Left ventricle myocardium inferior (tissue), 1 donor: ENCODE measurements at regions of chr6 and their contacts with region 1.

Region 1: DNA sequence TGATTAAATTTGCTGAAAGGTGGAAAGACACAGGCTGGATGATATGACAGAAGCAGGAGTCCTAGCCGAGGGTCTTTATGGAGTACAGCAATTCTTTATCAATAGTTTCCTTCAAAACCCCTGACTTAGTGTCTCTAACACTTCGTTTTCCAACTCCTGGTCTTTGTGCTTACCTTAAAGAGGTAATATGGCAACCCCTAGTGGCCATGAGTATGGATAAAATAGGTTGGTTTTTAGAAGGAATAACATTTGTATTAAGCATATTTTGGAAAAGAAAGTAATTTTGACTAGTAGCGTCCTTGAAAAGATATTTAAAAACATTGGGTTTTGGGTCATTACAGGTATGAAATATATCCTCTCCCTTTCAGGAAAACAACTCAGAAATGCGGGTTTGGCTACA is 51.9 kb downstream of the VGLL2 start:
- DNase-seq: no peak
- H3K4me3 ChIP-seq: no peak overlapping the region
- H3K27ac ChIP-seq: no peak overlapping the region
- H3K4me1 ChIP-seq: no peaks in the 10 kb centered on the region
- H3K27me3 ChIP-seq: peaks cover 11% of the 10 kb centered on the region
- CTCF ChIP-seq: peak; percentile 56

Region 2: GRCh38 chr6:116894669-116895068 is 422.6 kb before region 1 on chr6:
- intact Hi-C with region 1: no loop called
- DNase-seq: no peak
- H3K4me3 ChIP-seq: no peak overlapping the region
- H3K27ac ChIP-seq: no peak overlapping the region
- H3K4me1 ChIP-seq: no peaks in the 10 kb centered on the region
- H3K27me3 ChIP-seq: peaks cover under 1% of the 10 kb centered on the region
- CTCF ChIP-seq: no peak

Region 3: GRCh38 chr6:116971959-116972358 is 345.3 kb before region 1 on chr6:
- intact Hi-C with region 1: loop called (anchors 10 kb)
- DNase-seq: no peak
- H3K4me3 ChIP-seq: no peak overlapping the region
- H3K27ac ChIP-seq: no peak overlapping the region
- H3K4me1 ChIP-seq: no peaks in the 10 kb centered on the region
- H3K27me3 ChIP-seq: peaks cover 28% of the 10 kb centered on the region
- CTCF ChIP-seq: peak; percentile 66

Region 4: GRCh38 chr6:117960877-117961276 is 643.6 kb after region 1 on chr6:
- intact Hi-C with region 1: no loop called
- DNase-seq: no peak
- H3K4me3 ChIP-seq: no peak overlapping the region
- H3K27ac ChIP-seq: no peak overlapping the region
- H3K4me1 ChIP-seq: no peaks in the 10 kb centered on the region
- H3K27me3 ChIP-seq: peaks cover 17% of the 10 kb centered on the region
- CTCF ChIP-seq: no peak